IMR-90 (cell line): ENCODE measurements at regions of chr4 and their contacts with region 1.

Region 1: GRCh38 chr4:121823505-121824170 is at the start of gene CCNA2:
- DNase-seq: peak; percentile 96
- ATAC-seq: peak; percentile 94
- H3K4me3 ChIP-seq: peak within 1 kb of the TSS; percentile 71
- H3K27ac ChIP-seq: peak within 1 kb of the TSS; percentile 69
- H3K4me1 ChIP-seq: peaks cover 4% of the 10 kb centered on the region
- H3K27me3 ChIP-seq: no peaks in the 10 kb centered on the region
- CTCF ChIP-seq: no peak; the same call in 1 of the 2 replicates
- POLR2A ChIP-seq: peak; percentile 46; the same call in 1 of the 2 replicates
- RAD21 ChIP-seq: no peak
- total RNA-seq, gene CCNA2: 54.3 and 59.7 TPM in 2 replicates

Region 2: GRCh38 chr4:121370729-121371325 is 452.8 kb before region 1 on chr4:
- CTCF ChIA-PET with region 1: no interaction called
- POLR2A ChIA-PET with region 1: no interaction called
- dilution Hi-C with region 1: no loop called
- in situ Hi-C with region 1: no loop called
- intact Hi-C with region 1: loop called (anchors 10 kb)
- DNase-seq: peak; percentile 33
- ATAC-seq: peak; percentile 84
- H3K4me3 ChIP-seq: no peak overlapping the region
- H3K27ac ChIP-seq: no peak overlapping the region
- H3K4me1 ChIP-seq: no peaks in the 10 kb centered on the region
- H3K27me3 ChIP-seq: no peaks in the 10 kb centered on the region; the same call in 1 of the 2 replicates
- CTCF ChIP-seq: peak; percentile 64
- POLR2A ChIP-seq: no peak
- RAD21 ChIP-seq: peak; percentile 50

Region 3: DNA sequence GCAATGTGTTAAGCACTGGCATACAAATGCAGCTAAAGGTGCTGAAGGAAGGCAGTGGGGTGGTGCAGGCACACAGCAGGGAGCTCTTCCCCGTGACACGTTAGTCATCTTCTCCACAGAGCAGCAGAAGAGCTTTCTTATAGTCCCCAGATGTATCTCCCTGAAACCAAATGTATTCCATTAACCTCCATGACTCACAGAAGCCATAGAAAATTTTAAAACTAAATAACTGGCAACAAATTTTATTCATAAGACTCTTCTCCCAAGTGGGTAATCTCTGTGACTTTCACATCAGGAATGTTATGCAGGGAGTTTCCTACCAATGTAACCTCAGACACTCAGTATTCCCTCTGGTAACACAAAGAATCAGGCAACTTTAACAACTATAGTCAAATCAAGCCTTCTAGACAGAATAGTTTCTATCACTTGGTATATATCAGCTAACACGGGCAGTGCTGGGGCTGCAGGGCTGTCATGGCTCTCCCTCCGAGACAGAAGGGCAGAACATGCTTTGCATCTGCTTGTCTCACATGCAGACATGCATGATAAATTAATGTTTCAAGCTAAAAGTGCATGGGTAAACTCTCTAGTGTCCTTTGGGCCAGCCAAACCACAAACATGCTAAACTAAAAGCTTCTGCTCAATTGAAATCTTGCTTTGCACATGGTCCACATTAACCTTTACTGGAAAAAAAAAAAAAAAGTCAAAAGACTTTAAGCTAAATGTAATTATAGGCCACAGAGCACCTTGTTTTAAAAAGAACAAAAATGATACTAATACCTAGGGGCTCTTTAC is 155.1 kb before region 1 on chr4:
- CTCF ChIA-PET with region 1: no interaction called
- POLR2A ChIA-PET with region 1: no interaction called
- dilution Hi-C with region 1: loop called (anchors 10 kb)
- in situ Hi-C with region 1: no loop called
- intact Hi-C with region 1: no loop called
- DNase-seq: peak; percentile 99
- ATAC-seq: peak; percentile 83
- H3K4me3 ChIP-seq: no peak overlapping the region
- H3K27ac ChIP-seq: peak overlapping the region; percentile 93
- H3K4me1 ChIP-seq: peaks cover 14% of the 10 kb centered on the region
- H3K27me3 ChIP-seq: no peaks in the 10 kb centered on the region
- CTCF ChIP-seq: no peak
- POLR2A ChIP-seq: no peak
- RAD21 ChIP-seq: no peak

Region 4: GRCh38 chr4:121696581-121697461 is 126.8 kb before region 1 on chr4 and contains the start of gene ANXA5:
- CTCF ChIA-PET with region 1: interaction called, 3 read pairs
- POLR2A ChIA-PET with region 1: interaction called, 4 read pairs
- dilution Hi-C with region 1: no loop called
- in situ Hi-C with region 1: no loop called
- intact Hi-C with region 1: loop called (anchors 2 kb)
- DNase-seq: peak; percentile 88
- ATAC-seq: peak; percentile 94
- H3K4me3 ChIP-seq: peak within 1 kb of the TSS; percentile 99
- H3K27ac ChIP-seq: peak within 1 kb of the TSS; percentile 99
- H3K4me1 ChIP-seq: peaks cover 8% of the 10 kb centered on the region
- H3K27me3 ChIP-seq: no peaks in the 10 kb centered on the region
- CTCF ChIP-seq: peak; percentile 61
- POLR2A ChIP-seq: peak; percentile 96
- RAD21 ChIP-seq: peak; percentile 67
- total RNA-seq, gene ANXA5: 780 and 1,163 TPM in 2 replicates

Region 5: GRCh38 chr4:121764707-121765593 is 58.7 kb before region 1 on chr4 and contains the start of gene SMIM43:
- CTCF ChIA-PET with region 1: interaction called, 3 read pairs
- POLR2A ChIA-PET with region 1: no interaction called
- dilution Hi-C with region 1: no loop called
- in situ Hi-C with region 1: no loop called
- intact Hi-C with region 1: loop called (anchors 5 kb)
- DNase-seq: no peak
- ATAC-seq: peak; percentile 78
- H3K4me3 ChIP-seq: peak within 1 kb of the TSS; percentile 95
- H3K27ac ChIP-seq: peak within 1 kb of the TSS; percentile 38; the same call in 1 of the 2 replicates
- H3K4me1 ChIP-seq: peaks cover 4% of the 10 kb centered on the region
- H3K27me3 ChIP-seq: no peaks in the 10 kb centered on the region
- CTCF ChIP-seq: no peak
- POLR2A ChIP-seq: no peak
- RAD21 ChIP-seq: no peak
- total RNA-seq, gene SMIM43: 1.4 TPM in 2 replicates

Region 6: GRCh38 chr4:122577808-122578781 is 754.5 kb after region 1 on chr4:
- CTCF ChIA-PET with region 1: no interaction called
- POLR2A ChIA-PET with region 1: no interaction called
- dilution Hi-C with region 1: no loop called
- in situ Hi-C with region 1: no loop called
- intact Hi-C with region 1: no loop called
- DNase-seq: peak; percentile 38
- ATAC-seq: peak; percentile 72; the same call in 1 of the 2 replicates
- H3K4me3 ChIP-seq: no peak overlapping the region
- H3K27ac ChIP-seq: no peak overlapping the region
- H3K4me1 ChIP-seq: no peaks in the 10 kb centered on the region
- H3K27me3 ChIP-seq: no peaks in the 10 kb centered on the region
- CTCF ChIP-seq: peak; percentile 56
- POLR2A ChIP-seq: no peak
- RAD21 ChIP-seq: peak; percentile 40